ENCODE measurements at regions of chr5 and their contacts with region 1.

Region 1: GRCh38 chr5:45765561-45765960 is 69.4 kb upstream of the HCN1 start:
- DNase-seq: peak in 3 of 10 donors; percentile 34 to 53 (median 35)
- H3K4me3 ChIP-seq: no peak overlapping the region
- H3K27ac ChIP-seq: peak overlapping the region in 43 of 59 donors; percentile 6 to 83 (median 56)
- H3K27me3 ChIP-seq: no peaks in the 10 kb centered on the region
- CTCF ChIP-seq: no peak

Region 2: DNA sequence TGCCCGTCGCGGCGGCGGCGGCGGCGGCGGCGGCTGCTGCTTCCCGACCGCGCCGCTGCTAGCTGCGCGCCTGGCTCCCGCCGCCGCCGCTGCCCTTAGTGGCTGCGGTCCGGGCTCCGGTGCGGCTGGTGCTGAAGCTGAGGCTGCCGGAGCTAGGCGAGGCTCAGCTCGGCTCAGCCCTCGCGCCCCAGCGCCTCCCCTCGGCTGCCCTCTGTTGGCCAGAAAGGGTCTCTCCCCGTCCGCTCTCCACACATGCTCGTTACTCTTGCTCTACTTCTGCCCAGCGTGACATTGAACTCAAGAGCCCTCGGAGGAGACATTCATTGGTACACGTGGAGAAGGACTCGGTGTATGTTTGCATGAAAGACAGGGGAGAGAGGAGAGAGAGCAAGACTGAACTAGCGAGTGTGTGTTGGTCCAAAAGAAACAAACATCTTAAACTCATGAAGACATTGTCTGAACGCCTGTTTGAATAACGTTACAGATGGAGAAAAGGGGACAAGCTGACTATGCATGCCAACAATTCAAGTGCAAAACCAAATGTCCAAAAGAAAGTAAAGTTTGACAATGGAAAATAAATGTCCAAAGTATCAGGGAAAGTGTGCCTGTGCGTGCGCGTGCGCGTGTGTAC is 69.2 kb before region 1 on chr5 and contains the start of gene HCN1:
- intact Hi-C with region 1: loop called in 1 of 2 experiments (anchors 2 kb)
- DNase-seq: peak; percentile 56 to 93 (median 80)
- H3K4me3 ChIP-seq: peak within 1 kb of the TSS; percentile 26 to 77 (median 60)
- H3K27ac ChIP-seq: peak within 1 kb of the TSS in 56 of 59 donors; percentile 3 to 92 (median 81)
- H3K27me3 ChIP-seq: peaks cover 0 to 48% (median 4%) of the 10 kb centered on the region in 45 donors
- CTCF ChIP-seq: peak; percentile 28 to 82 (median 69)
- total RNA-seq, gene HCN1: 14.1 to 84.0 (median 51.9) TPM

Measured in dorsolateral prefrontal cortex (tissue), 120 donors.